Activated B cell treated with CpG ODN at 0.5 μM for 24 hours (primary cell): ENCODE measurements at regions of chr4 and their contacts with region 1.

Region 1: GRCh38 chr4:39609454-39609931 is 29.2 kb downstream of the SMIM14 start:
- DNase-seq: no peak
- ATAC-seq: peak; percentile 84
- H3K4me3 Mint-ChIP-seq: peak overlapping the region; percentile 75
- H3K27ac Mint-ChIP-seq: peak overlapping the region; percentile 88
- H3K4me1 Mint-ChIP-seq: peaks cover 67% of the 10 kb centered on the region
- H3K27me3 Mint-ChIP-seq: no peaks in the 10 kb centered on the region
- CTCF ChIP-seq: no peak

Region 2: GRCh38 chr4:39565878-39566600 is 43.5 kb before region 1 on chr4:
- CTCF ChIA-PET with region 1: no interaction called
- POLR2A ChIA-PET with region 1: interaction called, 9 read pairs
- intact Hi-C with region 1: loop called (anchors 5 kb)
- DNase-seq: no peak
- ATAC-seq: no peak
- H3K4me3 Mint-ChIP-seq: no peak overlapping the region
- H3K27ac Mint-ChIP-seq: peak overlapping the region; percentile 20
- H3K4me1 Mint-ChIP-seq: peaks cover 34% of the 10 kb centered on the region
- H3K27me3 Mint-ChIP-seq: no peaks in the 10 kb centered on the region
- CTCF ChIP-seq: no peak

Region 3: DNA sequence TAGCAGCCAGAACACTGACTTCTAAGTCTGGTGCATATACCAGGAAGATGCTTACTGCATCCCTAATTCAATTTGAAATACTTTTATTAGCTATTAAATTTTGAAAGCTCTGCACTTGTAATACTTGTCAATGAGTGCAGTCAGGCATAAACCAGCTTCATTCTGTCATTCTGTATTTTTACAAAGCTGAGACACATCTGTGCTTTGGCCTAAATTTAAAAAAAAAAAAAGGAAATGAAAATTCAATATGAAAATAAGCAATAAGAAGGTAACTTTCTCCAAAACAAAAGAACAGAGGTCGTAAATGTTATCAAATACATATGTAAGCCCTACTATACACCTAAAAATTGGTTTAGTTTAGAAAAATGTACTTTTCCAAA is 22.2 kb after region 1 on chr4:
- CTCF ChIA-PET with region 1: interaction called, 7 read pairs
- POLR2A ChIA-PET with region 1: interaction called, 137 read pairs
- intact Hi-C with region 1: loop called (anchors 1 kb)
- DNase-seq: no peak
- ATAC-seq: peak; percentile 70
- H3K4me3 Mint-ChIP-seq: peak overlapping the region; percentile 44
- H3K27ac Mint-ChIP-seq: peak overlapping the region; percentile 96
- H3K4me1 Mint-ChIP-seq: peaks cover 86% of the 10 kb centered on the region
- H3K27me3 Mint-ChIP-seq: no peaks in the 10 kb centered on the region
- CTCF ChIP-seq: no peak

Region 4: DNA sequence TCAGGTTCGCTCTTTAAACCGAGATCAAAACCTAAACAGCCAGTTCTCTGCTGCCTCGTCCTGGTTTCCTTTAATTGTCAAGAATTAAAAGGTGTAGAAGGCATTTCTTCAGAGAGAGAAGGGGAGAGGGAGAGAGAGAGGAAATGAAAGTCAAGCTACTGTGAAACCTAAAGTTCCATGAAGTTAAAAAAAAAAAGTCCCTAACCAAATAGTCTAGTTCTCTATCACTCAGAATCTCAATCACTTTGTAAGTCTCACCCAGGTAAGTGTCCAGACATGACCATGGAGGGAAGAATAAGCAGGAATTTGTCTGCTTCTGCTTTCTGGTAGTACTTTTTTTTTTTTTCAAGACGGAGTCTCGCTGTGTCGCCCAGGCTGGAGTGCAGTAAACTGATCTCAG is 48.0 kb after region 1 on chr4:
- CTCF ChIA-PET with region 1: no interaction called
- POLR2A ChIA-PET with region 1: interaction called, 4 read pairs
- intact Hi-C with region 1: loop called (anchors 1 kb)
- DNase-seq: no peak
- ATAC-seq: peak; percentile 91
- H3K4me3 Mint-ChIP-seq: peak overlapping the region; percentile 71
- H3K27ac Mint-ChIP-seq: peak overlapping the region; percentile 81
- H3K4me1 Mint-ChIP-seq: peaks cover 35% of the 10 kb centered on the region
- H3K27me3 Mint-ChIP-seq: no peaks in the 10 kb centered on the region
- CTCF ChIP-seq: no peak